ENCODE measurements at regions of chr11 and their contacts with region 1.

Region 1: GRCh38 chr11:87463486-87464102 is 425.9 kb downstream of the TMEM135 start:
- DNase-seq: no peak

Region 2: GRCh38 chr11:85485902-85486301 is 1977.7 kb before region 1 on chr11:
- intact Hi-C with region 1: loop called in 1 of 2 experiments (anchors 5 kb)
- DNase-seq: no peak

Region 3: DNA sequence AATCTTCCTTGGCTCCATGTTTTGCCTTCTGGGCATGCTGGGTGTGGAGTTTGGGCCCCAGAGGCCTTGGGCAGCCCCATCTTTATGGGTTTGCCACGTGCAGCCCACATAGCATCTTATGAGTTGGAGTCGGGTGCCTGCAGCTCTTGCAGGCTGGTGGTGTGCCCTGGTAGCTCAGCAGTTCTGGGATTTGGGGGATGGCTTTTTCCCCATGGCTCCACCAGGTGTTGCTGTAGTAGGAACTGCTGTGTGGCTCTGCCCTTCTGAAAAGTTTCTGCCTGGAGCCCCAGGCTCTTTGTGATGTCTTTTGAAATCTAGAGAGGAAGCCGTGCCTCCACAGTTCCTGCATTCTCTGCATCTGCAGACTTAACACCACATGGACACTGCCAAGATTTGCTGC is 1202.3 kb before region 1 on chr11:
- intact Hi-C with region 1: no loop called
- DNase-seq: no peak

Region 4: DNA sequence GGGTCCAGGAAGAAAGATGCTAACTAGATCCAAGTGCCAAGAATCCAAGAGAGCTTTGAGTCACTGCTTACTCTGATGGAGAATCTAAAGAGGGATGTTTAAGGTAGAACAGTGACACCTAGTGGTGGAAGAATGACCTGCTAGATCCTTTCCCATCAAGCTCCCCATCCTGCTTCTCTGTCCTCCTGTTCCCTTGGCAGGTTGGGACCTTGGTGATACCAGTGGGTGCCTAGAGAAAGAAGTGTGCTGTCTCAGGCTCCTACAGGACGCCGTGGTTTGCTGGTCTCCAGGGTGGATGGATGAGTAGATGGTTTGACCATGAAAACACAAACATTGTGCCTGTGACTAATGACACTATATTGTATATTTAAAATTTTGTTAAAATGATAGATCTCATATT is 42.2 kb before region 1 on chr11:
- intact Hi-C with region 1: no loop called
- DNase-seq: no peak

Measured in posterior vena cava (tissue), 2 donors.